ENCODE measurements at regions of chr9 and their contacts with region 1.

Region 1: DNA sequence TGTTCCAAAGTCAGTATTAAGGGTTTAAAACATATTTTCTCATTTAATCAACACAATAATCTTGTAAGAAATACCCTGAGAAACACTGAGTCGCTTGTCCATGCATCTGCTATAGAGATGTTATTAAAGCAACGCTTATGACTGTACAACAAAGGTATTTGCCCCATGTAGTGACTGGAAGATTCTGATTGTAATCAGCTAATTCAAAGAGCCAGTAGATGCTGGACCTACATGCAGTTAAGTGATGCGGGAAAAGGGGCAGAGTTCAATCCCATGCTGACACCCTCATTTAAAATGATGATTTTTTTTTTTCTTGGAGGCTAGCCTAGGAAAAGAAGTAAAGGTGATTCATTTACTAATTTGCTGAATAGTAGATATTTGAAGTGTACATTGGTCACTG is 149.3 kb upstream of the MTAP start:
- DNase-seq: no peak
- ATAC-seq: no peak

Region 2: DNA sequence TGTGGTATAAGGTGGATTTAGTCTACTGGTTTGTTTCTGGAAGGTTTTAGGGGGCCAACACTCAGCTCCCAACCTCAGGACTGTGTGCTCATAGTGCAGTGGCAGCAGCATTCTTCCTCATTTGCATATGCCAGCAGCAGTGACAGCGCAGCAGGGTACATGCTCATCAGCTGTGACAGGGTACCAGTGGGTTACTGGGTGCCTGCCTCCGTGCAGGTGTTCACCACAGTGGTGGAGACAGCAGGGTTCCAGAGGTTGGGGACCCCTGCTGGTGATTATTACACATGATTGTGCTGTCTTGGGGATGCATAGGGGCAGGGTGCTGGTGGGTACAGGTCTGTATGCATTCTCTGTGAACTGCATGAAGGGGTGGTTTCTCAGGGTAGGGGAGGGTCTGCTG is 125.5 kb before region 1 on chr9:
- intact Hi-C with region 1: loop called in 1 of 2 experiments (anchors 5 kb)
- DNase-seq: no peak
- ATAC-seq: no peak